ENCODE measurements at regions of chr12 and their contacts with region 1.

Region 1: DNA sequence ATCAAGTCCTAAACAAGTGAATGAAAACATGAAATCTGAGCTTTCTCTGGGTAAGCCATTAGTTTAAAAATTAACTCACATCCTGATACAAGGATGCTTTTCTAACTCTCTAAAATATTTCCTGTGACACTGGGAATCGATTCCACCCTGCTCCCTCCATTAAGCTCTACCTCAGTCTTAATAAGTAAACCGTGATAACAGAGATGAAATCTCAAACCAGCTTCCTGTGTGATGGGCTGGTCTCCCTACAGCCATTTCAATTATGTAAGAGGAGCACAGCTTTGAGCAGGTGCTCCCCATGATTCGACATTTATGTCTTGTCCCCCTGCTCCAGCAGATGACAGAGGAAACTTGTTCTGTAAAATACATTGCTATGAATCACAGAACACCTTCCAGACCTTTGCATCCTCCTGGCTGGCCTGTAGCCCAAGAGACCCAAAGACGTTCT is 59.0 kb downstream of the GAS2L3 start:
- DNase-seq: no peak
- H3K27ac ChIP-seq: no peak overlapping the region
- CTCF ChIP-seq: no peak

Region 2: DNA sequence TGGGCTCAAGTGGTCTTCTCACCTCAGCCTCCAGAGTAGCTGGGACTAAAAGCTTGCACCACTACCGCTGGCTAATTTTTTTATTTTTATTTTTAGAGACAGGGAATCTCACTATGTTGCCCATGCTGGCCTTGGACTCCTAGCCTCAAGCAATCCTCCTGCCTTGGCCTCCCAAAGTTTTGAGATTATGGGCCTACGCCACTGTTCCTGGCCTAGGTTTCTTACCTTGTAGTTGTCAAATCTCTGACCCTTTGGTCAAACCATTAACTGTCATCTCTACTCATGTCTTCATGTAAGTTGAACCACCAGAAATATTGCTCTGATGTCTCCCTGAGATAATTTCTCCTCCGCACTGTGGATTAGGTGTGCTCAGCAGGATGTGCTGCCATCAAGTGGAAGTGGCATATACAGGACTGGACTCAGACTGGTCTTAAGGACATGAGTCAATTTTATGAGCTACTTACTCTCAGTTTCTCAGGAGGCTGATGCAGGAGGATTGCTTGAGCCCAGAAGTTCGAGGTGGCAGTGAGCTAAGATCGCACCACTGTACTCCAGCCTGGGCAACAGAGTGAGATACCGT is 403.3 kb before region 1 on chr12:
- CTCF ChIA-PET with region 1: no interaction called
- POLR2A ChIA-PET with region 1: interaction called, 11 read pairs
- DNase-seq: no peak
- H3K27ac ChIP-seq: no peak overlapping the region
- CTCF ChIP-seq: no peak

Region 3: GRCh38 chr12:100426145-100426544 is 206.3 kb before region 1 on chr12:
- CTCF ChIA-PET with region 1: no interaction called
- POLR2A ChIA-PET with region 1: no interaction called
- DNase-seq: no peak
- H3K27ac ChIP-seq: no peak overlapping the region
- CTCF ChIP-seq: no peak

Region 4: GRCh38 chr12:100608776-100609175 is 23.7 kb before region 1 on chr12:
- CTCF ChIA-PET with region 1: no interaction called
- POLR2A ChIA-PET with region 1: no interaction called
- DNase-seq: no peak
- H3K27ac ChIP-seq: no peak overlapping the region
- CTCF ChIP-seq: no peak

Measured in RWPE1 (cell line).